MCF 10A (cell line): ENCODE measurements at regions of chr16 and their contacts with region 1.

Region 1: GRCh38 chr16:2147981-2148671 is at the start of gene RAB26:
- DNase-seq: peak; percentile 91
- H3K4me3 Mint-ChIP-seq: peak within 1 kb of the TSS; percentile 59
- H3K27ac Mint-ChIP-seq: no peak within 1 kb of the TSS
- H3K4me1 Mint-ChIP-seq: peaks cover 8% of the 10 kb centered on the region
- H3K27me3 Mint-ChIP-seq: no peaks in the 10 kb centered on the region
- CTCF ChIP-seq: no peak
- total RNA-seq, gene RAB26: 0.81 and 1.0 TPM in 2 replicates

Region 2: GRCh38 chr16:1863681-1864460 is 284.3 kb before region 1 on chr16:
- CTCF ChIA-PET with region 1: no interaction called
- POLR2A ChIA-PET with region 1: no interaction called
- intact Hi-C with region 1: loop called (anchors 5 kb)
- DNase-seq: peak; percentile 42
- H3K4me3 Mint-ChIP-seq: no peak overlapping the region
- H3K27ac Mint-ChIP-seq: no peak overlapping the region
- H3K4me1 Mint-ChIP-seq: no peaks in the 10 kb centered on the region
- H3K27me3 Mint-ChIP-seq: peaks cover 21% of the 10 kb centered on the region
- CTCF ChIP-seq: peak; percentile 67

Region 3: GRCh38 chr16:2016407-2016922 is 131.7 kb before region 1 on chr16:
- CTCF ChIA-PET with region 1: interaction called, 3 read pairs
- POLR2A ChIA-PET with region 1: interaction called, 14 read pairs
- intact Hi-C with region 1: no loop called
- DNase-seq: no peak
- H3K4me3 Mint-ChIP-seq: peak overlapping the region; percentile 47
- H3K27ac Mint-ChIP-seq: peak overlapping the region; percentile 96
- H3K4me1 Mint-ChIP-seq: peaks cover 6% of the 10 kb centered on the region
- H3K27me3 Mint-ChIP-seq: no peaks in the 10 kb centered on the region
- CTCF ChIP-seq: peak; percentile 39

Region 4: GRCh38 chr16:2121853-2122252 is 26.3 kb before region 1 on chr16:
- CTCF ChIA-PET with region 1: interaction called, 13 read pairs
- POLR2A ChIA-PET with region 1: interaction called, 12 read pairs
- intact Hi-C with region 1: no loop called
- DNase-seq: no peak
- H3K4me3 Mint-ChIP-seq: peak overlapping the region; percentile 47
- H3K27ac Mint-ChIP-seq: no peak overlapping the region
- H3K4me1 Mint-ChIP-seq: peaks cover 20% of the 10 kb centered on the region
- H3K27me3 Mint-ChIP-seq: no peaks in the 10 kb centered on the region
- CTCF ChIP-seq: no peak

Region 5: GRCh38 chr16:2160915-2161551 is 12.9 kb after region 1 on chr16:
- CTCF ChIA-PET with region 1: interaction called, 7 read pairs
- POLR2A ChIA-PET with region 1: interaction called, 32 read pairs
- intact Hi-C with region 1: no loop called
- DNase-seq: peak; percentile 48
- H3K4me3 Mint-ChIP-seq: peak overlapping the region; percentile 38
- H3K27ac Mint-ChIP-seq: peak overlapping the region; percentile 12
- H3K4me1 Mint-ChIP-seq: peaks cover 38% of the 10 kb centered on the region
- H3K27me3 Mint-ChIP-seq: no peaks in the 10 kb centered on the region
- CTCF ChIP-seq: no peak

Region 6: GRCh38 chr16:2213817-2214720 is 65.9 kb after region 1 on chr16:
- CTCF ChIA-PET with region 1: interaction called, 4 read pairs
- POLR2A ChIA-PET with region 1: interaction called, 13 read pairs
- intact Hi-C with region 1: loop called (anchors 5 kb)
- DNase-seq: no peak
- H3K4me3 Mint-ChIP-seq: peak overlapping the region; percentile 77
- H3K27ac Mint-ChIP-seq: peak overlapping the region; percentile 33
- H3K4me1 Mint-ChIP-seq: peaks cover 18% of the 10 kb centered on the region
- H3K27me3 Mint-ChIP-seq: no peaks in the 10 kb centered on the region
- CTCF ChIP-seq: no peak

Region 7: GRCh38 chr16:2260250-2260649 is 112.1 kb after region 1 on chr16:
- CTCF ChIA-PET with region 1: no interaction called
- POLR2A ChIA-PET with region 1: no interaction called
- intact Hi-C with region 1: no loop called
- DNase-seq: no peak
- H3K4me3 Mint-ChIP-seq: no peak overlapping the region
- H3K27ac Mint-ChIP-seq: no peak overlapping the region
- H3K4me1 Mint-ChIP-seq: peaks cover 8% of the 10 kb centered on the region
- H3K27me3 Mint-ChIP-seq: no peaks in the 10 kb centered on the region
- CTCF ChIP-seq: no peak